Activated B cell treated with CpG ODN at 0.5 μM for 24 hours (primary cell): ENCODE measurements at regions of chr13 and their contacts with region 1.

Region 1: GRCh38 chr13:79194272-79194671 is 211.8 kb downstream of the RBM26 start:
- DNase-seq: no peak
- ATAC-seq: peak; percentile 86
- H3K4me3 Mint-ChIP-seq: peak overlapping the region; percentile 65
- H3K27ac Mint-ChIP-seq: peak overlapping the region; percentile 65
- H3K4me1 Mint-ChIP-seq: peaks cover 70% of the 10 kb centered on the region
- H3K27me3 Mint-ChIP-seq: no peaks in the 10 kb centered on the region
- CTCF ChIP-seq: no peak

Region 2: DNA sequence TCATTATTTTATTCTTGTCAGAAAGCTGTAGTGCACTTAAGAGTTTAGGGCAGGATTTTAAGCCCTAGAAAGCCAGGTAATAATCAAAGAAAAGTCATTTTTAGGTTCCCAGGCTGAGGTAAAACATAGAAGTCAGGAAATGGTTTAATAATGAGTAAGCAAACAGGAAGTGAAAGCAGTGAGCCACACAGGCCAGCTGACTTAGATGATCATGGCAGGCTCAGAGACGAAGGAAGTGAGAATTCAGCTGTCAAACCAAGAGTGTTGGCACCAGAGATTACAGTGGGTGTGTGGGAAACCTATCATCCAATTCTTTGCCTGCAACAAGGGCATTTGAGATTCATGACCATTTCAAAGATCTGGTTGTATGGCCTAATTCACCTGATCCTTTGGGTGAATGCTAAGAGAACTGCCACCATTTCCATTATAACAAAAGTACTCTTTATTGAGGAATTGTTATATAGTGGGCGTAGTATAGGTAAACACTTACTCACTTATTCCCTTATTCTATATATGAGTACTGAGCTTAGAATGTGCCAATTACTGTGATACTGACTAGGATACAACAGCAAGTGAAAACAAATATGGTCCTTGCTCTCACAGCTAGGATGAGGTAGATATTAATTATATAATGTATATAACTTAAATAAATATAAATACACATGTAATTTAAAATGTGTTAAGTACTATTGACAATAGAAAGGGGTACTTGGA is 1172.0 kb before region 1 on chr13:
- CTCF ChIA-PET with region 1: no interaction called
- POLR2A ChIA-PET with region 1: no interaction called
- intact Hi-C with region 1: loop called (anchors 5 kb)
- DNase-seq: peak; percentile 20
- ATAC-seq: peak; percentile 99
- H3K4me3 Mint-ChIP-seq: no peak overlapping the region
- H3K27ac Mint-ChIP-seq: peak overlapping the region; percentile 19
- H3K4me1 Mint-ChIP-seq: peaks cover 19% of the 10 kb centered on the region
- H3K27me3 Mint-ChIP-seq: peaks cover 4% of the 10 kb centered on the region
- CTCF ChIP-seq: no peak

Region 3: DNA sequence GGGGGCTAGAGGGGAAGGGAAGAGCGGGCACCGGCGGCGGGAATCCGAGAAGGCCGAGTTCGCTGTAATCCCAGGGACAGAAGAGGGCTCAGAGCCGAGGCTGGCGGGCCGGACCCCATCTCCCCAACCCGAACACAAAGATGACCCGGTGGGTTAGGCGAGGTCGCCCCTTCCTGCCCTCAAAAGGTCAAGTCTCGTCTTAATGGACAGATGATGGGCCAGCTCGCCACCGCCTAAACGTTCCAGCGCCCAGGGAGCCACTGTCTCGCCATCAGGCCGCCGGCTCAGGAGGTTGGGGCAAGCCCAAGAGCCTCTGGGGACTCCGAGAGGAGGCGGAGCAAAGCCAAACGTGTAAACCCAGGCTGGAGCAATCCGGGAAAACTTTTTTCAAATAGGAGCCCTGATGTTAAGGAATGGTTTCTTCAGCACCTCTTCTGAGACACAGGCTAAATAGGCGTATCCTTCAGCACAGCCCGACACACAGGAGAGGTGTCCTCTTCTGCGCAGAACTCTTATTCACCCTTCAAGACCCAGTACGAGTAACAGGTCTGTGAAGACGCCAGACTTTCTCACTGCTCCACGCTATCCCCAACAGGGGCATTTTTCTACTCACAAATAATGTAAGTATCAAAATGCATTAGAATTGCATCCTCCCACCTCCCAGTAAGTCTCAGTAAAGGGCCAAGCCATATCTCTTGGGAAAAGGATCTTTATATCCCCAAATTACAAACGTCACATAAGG is 584.6 kb before region 1 on chr13:
- CTCF ChIA-PET with region 1: no interaction called
- POLR2A ChIA-PET with region 1: no interaction called
- intact Hi-C with region 1: loop called (anchors 5 kb)
- DNase-seq: no peak
- ATAC-seq: peak; percentile 21
- H3K4me3 Mint-ChIP-seq: peak overlapping the region; percentile 84
- H3K27ac Mint-ChIP-seq: no peak overlapping the region
- H3K4me1 Mint-ChIP-seq: peaks cover 46% of the 10 kb centered on the region
- H3K27me3 Mint-ChIP-seq: peaks cover 55% of the 10 kb centered on the region
- CTCF ChIP-seq: no peak

Region 4: GRCh38 chr13:78909276-78909675 is 285.0 kb before region 1 on chr13:
- CTCF ChIA-PET with region 1: no interaction called
- POLR2A ChIA-PET with region 1: no interaction called
- intact Hi-C with region 1: no loop called
- DNase-seq: no peak
- ATAC-seq: no peak
- H3K4me3 Mint-ChIP-seq: no peak overlapping the region
- H3K27ac Mint-ChIP-seq: no peak overlapping the region
- H3K4me1 Mint-ChIP-seq: no peaks in the 10 kb centered on the region
- H3K27me3 Mint-ChIP-seq: peaks cover 2% of the 10 kb centered on the region
- CTCF ChIP-seq: no peak

Region 5: DNA sequence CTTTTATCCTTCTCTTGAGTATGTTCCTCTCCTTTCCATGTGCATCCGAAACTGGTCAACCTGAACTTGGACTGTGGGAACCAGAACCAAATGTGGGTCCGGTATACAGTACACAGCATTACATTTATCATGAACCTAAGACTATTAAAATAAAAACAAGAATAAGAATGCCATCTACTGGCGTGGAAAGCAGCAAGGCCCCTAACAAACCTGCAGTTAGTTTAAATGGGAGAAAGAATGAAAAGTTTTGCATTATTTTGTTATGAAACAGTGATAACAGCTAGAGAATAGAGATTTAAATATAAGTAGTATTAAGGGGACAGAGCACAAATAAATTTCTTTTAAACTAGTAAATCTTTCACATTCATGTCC is 52.3 kb after region 1 on chr13:
- CTCF ChIA-PET with region 1: interaction called, 3 read pairs
- POLR2A ChIA-PET with region 1: no interaction called
- intact Hi-C with region 1: loop called (anchors 2 kb)
- DNase-seq: no peak
- ATAC-seq: no peak
- H3K4me3 Mint-ChIP-seq: no peak overlapping the region
- H3K27ac Mint-ChIP-seq: no peak overlapping the region
- H3K4me1 Mint-ChIP-seq: peaks cover 7% of the 10 kb centered on the region
- H3K27me3 Mint-ChIP-seq: no peaks in the 10 kb centered on the region
- CTCF ChIP-seq: no peak

Region 6: GRCh38 chr13:79312340-79312855 is 118.1 kb after region 1 on chr13:
- CTCF ChIA-PET with region 1: no interaction called
- POLR2A ChIA-PET with region 1: no interaction called
- intact Hi-C with region 1: loop called (anchors 5 kb)
- DNase-seq: no peak
- ATAC-seq: no peak
- H3K4me3 Mint-ChIP-seq: no peak overlapping the region
- H3K27ac Mint-ChIP-seq: no peak overlapping the region
- H3K4me1 Mint-ChIP-seq: peaks cover 4% of the 10 kb centered on the region
- H3K27me3 Mint-ChIP-seq: no peaks in the 10 kb centered on the region
- CTCF ChIP-seq: no peak

Region 7: GRCh38 chr13:79393564-79394249 is 199.4 kb after region 1 on chr13:
- CTCF ChIA-PET with region 1: no interaction called
- POLR2A ChIA-PET with region 1: no interaction called
- intact Hi-C with region 1: loop called (anchors 5 kb)
- DNase-seq: peak; percentile 47
- ATAC-seq: peak; percentile 93
- H3K4me3 Mint-ChIP-seq: peak overlapping the region; percentile 65
- H3K27ac Mint-ChIP-seq: peak overlapping the region; percentile 85
- H3K4me1 Mint-ChIP-seq: peaks cover 65% of the 10 kb centered on the region
- H3K27me3 Mint-ChIP-seq: no peaks in the 10 kb centered on the region
- CTCF ChIP-seq: no peak